Activated CD4-positive, alpha-beta T cell treated with anti-CD3 and anti-CD28 coated beads, Interleukin-2, amount 10 ng/mL, durations not matched to agents 7 days and 5 days (primary cell): ENCODE measurements at regions of chr12 and their contacts with region 1.

Region 1: DNA sequence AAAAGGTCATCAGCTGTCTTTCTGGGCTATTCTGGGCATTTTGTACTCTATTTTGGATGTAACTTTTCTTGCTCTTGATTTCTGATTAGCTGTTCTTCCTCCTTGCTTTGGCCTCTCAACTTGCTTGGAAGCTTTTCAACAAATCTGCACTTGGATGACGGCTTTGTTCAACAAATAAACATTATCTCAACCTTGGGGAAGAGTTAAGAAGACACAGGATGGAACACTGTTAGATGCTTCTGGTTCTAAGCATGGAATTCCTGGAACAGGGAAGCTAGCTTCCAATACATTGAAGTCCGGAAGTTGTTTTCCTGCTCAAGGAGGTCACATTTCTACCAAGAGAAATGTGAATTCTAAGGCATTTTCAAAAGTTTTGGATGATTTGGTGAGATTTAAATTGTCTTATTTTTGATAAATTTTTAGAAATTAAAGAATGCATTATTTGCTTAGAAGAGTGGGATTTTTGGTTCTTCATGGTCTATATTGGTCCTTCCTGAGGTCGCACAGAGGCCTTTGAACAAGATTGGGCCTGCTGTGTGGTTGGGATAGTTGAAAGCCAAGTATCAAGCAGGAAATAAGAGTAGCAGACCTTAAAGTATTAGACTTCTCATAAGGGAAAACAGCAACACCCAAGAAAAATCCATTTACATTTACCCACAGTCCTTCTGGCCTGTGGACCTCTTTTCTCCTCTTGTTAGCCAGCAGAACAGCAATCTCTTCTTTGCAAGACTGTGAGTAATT is 59.2 kb downstream of the PPFIBP1 start:
- DNase-seq: no peak
- H3K4me3 Mint-ChIP-seq: no peak overlapping the region
- H3K27ac Mint-ChIP-seq: no peak overlapping the region
- H3K4me1 Mint-ChIP-seq: peaks cover 25% of the 10 kb centered on the region
- H3K27me3 Mint-ChIP-seq: no peaks in the 10 kb centered on the region

Region 2: GRCh38 chr12:27142101-27142721 is 441.0 kb before region 1 on chr12:
- CTCF ChIA-PET with region 1: no interaction called
- POLR2A ChIA-PET with region 1: no interaction called
- DNase-seq: peak; percentile 47
- H3K4me3 Mint-ChIP-seq: no peak overlapping the region
- H3K27ac Mint-ChIP-seq: no peak overlapping the region
- H3K4me1 Mint-ChIP-seq: peaks cover 26% of the 10 kb centered on the region
- H3K27me3 Mint-ChIP-seq: no peaks in the 10 kb centered on the region

Region 3: DNA sequence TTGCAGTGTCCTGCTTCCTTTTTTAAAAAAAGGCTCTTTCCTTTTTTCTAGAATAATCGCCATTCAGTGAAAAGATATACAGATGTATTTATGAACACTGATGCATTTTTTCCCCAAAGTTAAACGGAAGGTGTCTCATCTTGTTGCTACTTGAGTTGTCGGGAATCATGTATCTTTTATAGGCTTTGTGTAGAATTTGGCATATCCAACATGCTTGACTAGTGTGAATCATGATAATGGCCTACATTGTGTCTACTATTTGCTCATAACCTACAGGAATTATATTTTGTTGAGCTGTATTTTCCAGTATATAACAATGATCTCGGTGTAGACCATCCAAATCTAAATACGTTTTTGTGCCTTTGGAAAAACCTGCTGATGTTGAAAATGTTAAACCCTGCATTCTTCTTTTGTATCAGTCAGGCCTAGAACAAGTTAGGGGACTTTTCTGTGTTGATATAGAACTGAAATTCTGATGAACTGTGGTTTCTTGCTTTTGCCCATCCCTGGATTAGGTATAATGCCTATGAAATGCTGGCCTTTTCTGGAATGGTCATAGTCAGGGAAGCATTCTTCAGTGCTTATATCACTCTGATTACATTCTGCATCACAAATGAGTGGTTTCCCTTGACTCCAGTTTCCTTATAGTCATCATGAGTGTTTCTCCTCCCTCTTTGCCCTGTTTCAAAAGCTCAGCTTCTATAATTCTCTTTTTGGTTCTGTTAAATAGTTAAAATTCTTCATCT is 239.8 kb before region 1 on chr12:
- CTCF ChIA-PET with region 1: no interaction called
- POLR2A ChIA-PET with region 1: no interaction called
- DNase-seq: no peak
- H3K4me3 Mint-ChIP-seq: no peak overlapping the region
- H3K27ac Mint-ChIP-seq: no peak overlapping the region
- H3K4me1 Mint-ChIP-seq: no peaks in the 10 kb centered on the region
- H3K27me3 Mint-ChIP-seq: no peaks in the 10 kb centered on the region

Region 4: DNA sequence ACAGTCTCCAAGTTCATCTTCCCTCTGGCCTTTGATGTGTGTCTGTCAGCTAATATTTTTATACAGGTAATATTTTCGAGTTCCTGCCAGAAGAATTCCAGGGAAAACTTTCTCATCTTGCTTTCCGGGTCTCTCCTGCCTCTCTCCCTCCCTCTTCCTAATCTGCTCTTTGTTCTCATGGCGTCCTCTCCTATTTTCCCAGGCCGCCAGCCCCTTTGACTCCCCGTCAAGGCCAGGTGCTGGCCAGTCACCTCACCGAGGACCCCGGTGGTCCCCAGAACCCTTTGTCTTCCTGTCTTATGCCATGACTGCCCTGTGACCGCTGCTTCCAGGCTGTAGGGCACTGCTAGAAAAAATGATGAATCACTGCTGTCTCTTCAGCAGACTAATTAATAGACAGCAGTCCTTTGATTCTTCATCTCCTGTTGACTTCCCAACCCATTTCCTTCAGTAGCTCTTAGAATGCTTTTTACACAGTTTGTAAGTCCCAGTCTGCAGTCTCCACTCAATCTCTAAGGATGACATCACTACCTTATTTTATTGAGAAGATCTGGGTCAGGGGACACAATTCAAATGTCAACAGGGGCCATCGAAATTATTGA is 18.5 kb before region 1 on chr12:
- CTCF ChIA-PET with region 1: no interaction called
- POLR2A ChIA-PET with region 1: interaction called, 12 read pairs
- DNase-seq: no peak
- H3K4me3 Mint-ChIP-seq: no peak overlapping the region
- H3K27ac Mint-ChIP-seq: no peak overlapping the region
- H3K4me1 Mint-ChIP-seq: no peaks in the 10 kb centered on the region
- H3K27me3 Mint-ChIP-seq: peaks cover 5% of the 10 kb centered on the region

Region 5: GRCh38 chr12:27595231-27595642 is 12.0 kb after region 1 on chr12:
- CTCF ChIA-PET with region 1: no interaction called
- POLR2A ChIA-PET with region 1: no interaction called
- DNase-seq: no peak
- H3K4me3 Mint-ChIP-seq: no peak overlapping the region
- H3K27ac Mint-ChIP-seq: no peak overlapping the region
- H3K4me1 Mint-ChIP-seq: no peaks in the 10 kb centered on the region
- H3K27me3 Mint-ChIP-seq: no peaks in the 10 kb centered on the region